Common myeloid progenitor, CD34-positive (primary cell): ENCODE measurements at regions of chr13 and their contacts with region 1.

Region 1: GRCh38 chr13:95301183-95301967 is at the start of gene ABCC4:
- DNase-seq: peak; percentile 67 to 79 (median 69)
- H3K4me3 ChIP-seq: peak within 1 kb of the TSS; percentile 65 to 87 (median 79)
- H3K27ac ChIP-seq: peak within 1 kb of the TSS in 1 of 2 experiments; percentile 29
- H3K4me1 ChIP-seq: peaks cover 0 to 37% (median 17%) of the 10 kb centered on the region in 4 experiments
- H3K27me3 ChIP-seq: no peaks in the 10 kb centered on the region

Region 2: DNA sequence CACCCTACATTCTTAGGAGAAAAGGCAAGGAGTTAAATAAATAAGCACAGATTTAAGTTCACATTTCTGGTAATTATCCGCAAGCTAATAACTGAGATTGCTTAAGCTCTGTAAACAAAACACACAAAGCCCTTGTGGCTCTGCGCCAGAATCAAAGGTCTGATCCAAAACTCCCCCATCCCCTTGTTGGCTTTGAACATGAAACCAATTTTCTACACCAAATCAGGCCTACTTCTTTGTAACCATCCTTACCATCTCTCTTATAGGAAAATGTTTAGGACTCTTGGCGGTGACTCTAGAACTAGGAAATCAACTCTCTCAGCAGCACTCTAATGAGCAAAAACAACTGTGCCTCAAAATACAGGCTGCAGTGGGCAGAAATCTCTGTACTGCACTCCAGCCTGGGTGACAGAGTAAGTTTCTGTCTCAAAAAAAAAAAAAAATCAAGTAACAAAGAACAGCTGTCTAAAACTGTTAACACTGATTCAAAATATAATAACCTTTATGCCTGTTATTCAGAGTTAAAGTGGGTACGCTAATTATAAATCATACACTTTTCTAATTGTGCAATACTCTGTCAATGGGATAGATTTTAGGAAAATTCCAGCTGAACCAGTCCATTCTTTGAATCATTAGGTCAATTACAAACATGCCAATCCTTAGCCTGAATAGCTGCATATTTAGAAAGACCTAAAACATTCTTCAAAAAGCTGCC is 25.9 kb before region 1 on chr13:
- CTCF ChIA-PET with region 1: interaction called, 14 read pairs
- POLR2A ChIA-PET with region 1: no interaction called
- DNase-seq: no peak
- H3K4me3 ChIP-seq: no peak overlapping the region
- H3K27ac ChIP-seq: no peak overlapping the region
- H3K4me1 ChIP-seq: peaks cover 0 to 31% (median 9%) of the 10 kb centered on the region in 4 experiments
- H3K27me3 ChIP-seq: no peaks in the 10 kb centered on the region

Region 3: GRCh38 chr13:95289020-95289444 is 12.3 kb before region 1 on chr13:
- CTCF ChIA-PET with region 1: interaction called, 58 read pairs
- POLR2A ChIA-PET with region 1: no interaction called
- DNase-seq: peak in 1 of 3 donors; percentile 35
- H3K4me3 ChIP-seq: no peak overlapping the region
- H3K27ac ChIP-seq: no peak overlapping the region
- H3K4me1 ChIP-seq: peaks cover 0 to 15% (median 5%) of the 10 kb centered on the region in 4 experiments
- H3K27me3 ChIP-seq: no peaks in the 10 kb centered on the region

Region 4: DNA sequence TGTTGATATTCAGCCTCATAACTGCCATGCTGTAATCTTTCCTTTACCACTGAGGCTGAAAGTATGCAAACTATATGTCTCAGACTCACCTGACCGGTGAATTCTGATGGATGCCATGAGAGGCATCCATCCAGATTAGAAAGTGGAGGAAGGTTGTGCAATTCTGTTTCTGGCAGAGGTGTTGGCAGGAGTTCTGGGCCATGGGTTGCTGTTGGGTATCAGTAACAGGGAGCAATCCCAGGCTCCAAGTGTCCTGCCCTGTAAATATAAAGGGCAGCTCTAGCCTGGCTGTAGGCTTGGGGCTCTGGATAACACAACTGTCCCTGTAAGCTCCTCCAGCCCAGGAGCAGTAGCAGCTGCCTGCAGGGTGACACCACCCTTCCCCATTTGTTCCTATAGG is 77.2 kb after region 1 on chr13:
- CTCF ChIA-PET with region 1: interaction called, 246 read pairs
- POLR2A ChIA-PET with region 1: interaction called, 5 read pairs
- DNase-seq: no peak
- H3K4me3 ChIP-seq: no peak overlapping the region
- H3K27ac ChIP-seq: no peak overlapping the region
- H3K4me1 ChIP-seq: peaks cover 0 to 3% (median 1%) of the 10 kb centered on the region in 4 experiments
- H3K27me3 ChIP-seq: no peaks in the 10 kb centered on the region

Region 5: DNA sequence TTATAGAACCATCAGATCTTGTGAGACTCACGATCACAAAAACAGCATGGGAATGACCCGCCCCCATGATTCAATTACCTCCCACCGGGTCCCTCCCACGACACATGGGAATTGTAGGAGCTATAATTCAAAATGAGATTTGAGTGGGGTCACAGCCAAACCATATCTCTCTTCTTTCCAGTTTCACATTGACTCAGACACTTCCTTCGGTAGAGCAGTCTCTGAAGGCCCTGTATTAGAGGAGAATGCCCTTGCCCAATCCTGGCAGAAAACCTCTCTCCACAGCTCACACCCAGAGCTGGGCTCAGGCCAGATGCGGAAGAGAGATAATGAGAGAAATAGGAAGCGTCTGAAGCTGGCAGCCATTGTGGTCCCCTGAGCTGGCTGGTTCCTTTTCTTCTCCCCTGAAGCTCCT is 178.8 kb after region 1 on chr13:
- CTCF ChIA-PET with region 1: interaction called, 21 read pairs
- POLR2A ChIA-PET with region 1: no interaction called
- DNase-seq: peak; percentile 93 to 99 (median 98)
- H3K4me3 ChIP-seq: peak overlapping the region in 5 of 7 experiments; percentile 4 to 55 (median 50)
- H3K27ac ChIP-seq: peak overlapping the region; percentile 42 to 58
- H3K4me1 ChIP-seq: peaks cover 7 to 40% (median 26%) of the 10 kb centered on the region in 4 experiments
- H3K27me3 ChIP-seq: no peaks in the 10 kb centered on the region